ENCODE measurements at regions of chr3 and their contacts with region 1.

Region 1: DNA sequence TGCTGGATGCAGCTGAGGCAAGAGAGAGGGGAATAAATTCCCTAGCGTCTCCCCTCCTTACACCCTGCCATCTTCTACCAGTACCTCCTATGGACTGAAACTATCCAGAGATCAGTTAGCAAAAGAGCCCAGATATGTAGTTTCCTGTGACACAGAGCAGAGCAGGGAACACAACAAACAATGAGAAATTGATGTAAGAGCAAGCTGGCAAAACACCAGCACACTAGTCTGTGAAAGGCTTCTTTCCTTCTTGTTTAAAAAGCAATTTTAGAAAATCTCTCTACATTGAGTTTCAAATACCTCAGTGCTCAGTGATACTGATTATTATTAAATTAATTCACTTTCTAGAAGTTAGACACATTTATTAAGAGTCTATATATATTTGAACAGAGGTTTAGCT is 215.6 kb upstream of the AZI2 start:
- DNase-seq: no peak

Region 2: DNA sequence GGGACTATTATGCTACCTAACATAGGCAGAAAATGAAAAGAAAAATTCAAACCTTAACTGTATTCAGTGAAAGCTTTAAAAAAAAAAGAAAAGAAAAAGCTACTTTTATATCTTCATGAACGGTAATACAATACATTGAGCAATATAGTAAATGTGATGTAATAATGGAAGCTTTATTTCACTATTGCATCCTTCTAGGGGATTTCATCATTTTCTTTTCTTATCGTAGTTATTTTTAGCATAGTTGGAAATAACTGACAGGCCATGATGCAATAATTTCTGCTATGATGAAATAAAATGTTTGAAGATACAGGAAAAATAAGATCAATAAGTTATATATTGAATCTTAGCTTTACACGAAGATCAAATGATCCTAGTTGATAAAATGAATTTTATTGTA is 256.0 kb before region 1 on chr3:
- intact Hi-C with region 1: no loop called
- DNase-seq: no peak

Region 3: GRCh38 chr3:28547677-28548076 is 16.5 kb before region 1 on chr3:
- intact Hi-C with region 1: loop called (anchors 1 kb)
- DNase-seq: no peak

Measured in posterior cingulate gyrus (tissue), 11 donors.